ENCODE measurements at regions of chr2 and their contacts with region 1.

Region 1: GRCh38 chr2:105888625-105889400 is 144.1 kb downstream of the NCK2 start:
- DNase-seq: peak in 2 of 9 experiments; percentile 56 to 64
- ATAC-seq: no peak
- H3K4me3 ChIP-seq: no peak overlapping the region
- H3K4me3 Mint-ChIP-seq: no peak overlapping the region
- H3K27ac ChIP-seq: no peak overlapping the region
- H3K27ac Mint-ChIP-seq: peak overlapping the region; percentile 42
- H3K4me1 ChIP-seq: peaks cover 76% of the 10 kb centered on the region
- H3K4me1 Mint-ChIP-seq: peaks cover 70% of the 10 kb centered on the region
- H3K27me3 ChIP-seq: no peaks in the 10 kb centered on the region
- H3K27me3 Mint-ChIP-seq: no peaks in the 10 kb centered on the region
- CTCF ChIP-seq: no peak

Region 2: GRCh38 chr2:105582952-105583660 is 305.7 kb before region 1 on chr2:
- CTCF ChIA-PET with region 1: interaction called, 3 read pairs
- POLR2A ChIA-PET with region 1: no interaction called
- intact Hi-C with region 1: loop called (anchors 10 kb)
- DNase-seq: peak in 1 of 9 experiments; percentile 27
- ATAC-seq: peak; percentile 69
- H3K4me3 ChIP-seq: no peak overlapping the region
- H3K4me3 Mint-ChIP-seq: no peak overlapping the region
- H3K27ac ChIP-seq: no peak overlapping the region
- H3K27ac Mint-ChIP-seq: no peak overlapping the region
- H3K4me1 ChIP-seq: peaks cover 25% of the 10 kb centered on the region
- H3K4me1 Mint-ChIP-seq: peaks cover 34% of the 10 kb centered on the region
- H3K27me3 ChIP-seq: no peaks in the 10 kb centered on the region
- H3K27me3 Mint-ChIP-seq: no peaks in the 10 kb centered on the region
- CTCF ChIP-seq: no peak

Region 3: DNA sequence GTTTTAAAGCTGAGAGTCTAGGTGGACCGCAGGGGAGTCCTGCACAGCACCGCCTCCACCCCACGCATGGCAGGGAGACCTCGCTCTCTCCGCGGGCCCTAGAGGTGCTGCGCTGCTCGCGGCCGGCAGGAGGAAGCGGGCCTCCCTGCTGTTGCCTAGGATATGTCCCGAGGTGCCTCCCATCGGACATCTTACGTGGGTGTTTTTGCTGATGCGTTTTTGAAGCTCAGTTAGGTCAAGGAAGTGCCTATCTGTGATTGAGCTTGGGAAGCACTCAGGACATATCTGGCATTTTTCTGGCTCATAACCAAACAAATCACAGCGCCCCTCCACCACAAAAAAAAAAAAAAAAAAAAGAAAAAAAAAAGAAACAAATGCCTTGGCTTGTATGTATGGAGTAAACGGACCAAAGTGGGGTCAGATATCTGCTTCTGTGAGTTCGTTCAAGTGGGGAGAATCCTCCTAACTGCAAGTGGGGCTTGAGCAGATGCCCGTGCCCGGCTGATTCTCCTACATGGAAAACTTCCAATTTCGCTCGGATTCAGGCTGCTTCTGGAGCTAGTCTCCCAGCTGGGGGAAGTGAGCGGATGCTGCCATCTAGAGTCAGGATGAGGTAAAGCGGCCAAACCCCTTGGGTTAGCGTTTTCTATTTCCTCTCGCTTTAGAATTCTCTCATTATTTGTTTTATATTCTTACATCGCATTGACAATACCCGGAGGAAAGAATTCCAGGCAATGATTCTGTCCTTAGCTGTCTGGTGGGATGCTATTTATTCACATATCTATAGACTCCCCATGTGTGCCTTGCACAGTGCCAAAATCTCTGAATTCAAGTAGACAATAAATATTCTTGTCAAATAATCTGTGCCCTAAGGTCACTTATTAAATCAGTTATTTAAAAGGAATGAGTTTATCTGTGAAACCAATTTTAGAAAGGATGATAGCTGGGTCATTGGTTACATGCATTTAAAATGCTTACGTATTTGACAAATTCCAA is 693.6 kb after region 1 on chr2:
- CTCF ChIA-PET with region 1: no interaction called
- POLR2A ChIA-PET with region 1: no interaction called
- intact Hi-C with region 1: no loop called
- DNase-seq: peak; percentile 26 to 74 (median 60)
- ATAC-seq: peak; percentile 83
- H3K4me3 ChIP-seq: peak overlapping the region; percentile 54 to 57
- H3K4me3 Mint-ChIP-seq: peak overlapping the region; percentile 91
- H3K27ac ChIP-seq: no peak overlapping the region
- H3K27ac Mint-ChIP-seq: no peak overlapping the region
- H3K4me1 ChIP-seq: peaks cover 5% of the 10 kb centered on the region
- H3K4me1 Mint-ChIP-seq: peaks cover 15% of the 10 kb centered on the region
- H3K27me3 ChIP-seq: peaks cover 0 to 4% of the 10 kb centered on the region in 2 experiments
- H3K27me3 Mint-ChIP-seq: peaks cover 44% of the 10 kb centered on the region
- CTCF ChIP-seq: peak; percentile 93

Measured in CD8-positive, alpha-beta T cell (primary cell).